ENCODE measurements at regions of chr13 and their contacts with region 1.

Region 1: GRCh38 chr13:87403748-87404432 is 267.3 kb upstream of the SLITRK5 start:
- DNase-seq: no peak
- ATAC-seq: no peak
- H3K4me3 ChIP-seq: no peak overlapping the region
- H3K27ac ChIP-seq: no peak overlapping the region
- H3K4me1 ChIP-seq: no peaks in the 10 kb centered on the region
- H3K27me3 ChIP-seq: no peaks in the 10 kb centered on the region
- CTCF ChIP-seq: no peak
- POLR2A ChIP-seq: no peak

Region 2: DNA sequence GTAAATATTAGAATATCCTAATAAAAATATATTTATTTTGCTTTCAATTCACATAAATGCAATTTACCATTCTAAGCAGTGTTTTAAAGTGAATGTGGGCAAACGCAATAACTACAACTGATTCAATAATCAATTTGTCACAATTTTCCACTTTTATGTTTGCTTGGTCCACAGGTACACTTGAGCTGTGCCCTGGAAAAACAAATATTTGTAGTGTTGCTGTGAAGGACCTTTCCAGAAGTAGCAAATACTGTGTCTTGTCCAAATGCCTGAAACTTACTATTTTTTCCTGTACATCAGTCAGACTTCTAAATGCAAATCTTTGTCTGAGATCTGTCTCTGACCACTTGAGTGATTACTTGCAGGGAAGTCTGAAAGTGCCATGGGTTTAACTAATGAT is 578.5 kb before region 1 on chr13:
- in situ Hi-C with region 1: no loop called
- intact Hi-C with region 1: no loop called
- DNase-seq: no peak
- ATAC-seq: no peak
- H3K4me3 ChIP-seq: no peak overlapping the region
- H3K27ac ChIP-seq: no peak overlapping the region
- H3K4me1 ChIP-seq: no peaks in the 10 kb centered on the region
- H3K27me3 ChIP-seq: no peaks in the 10 kb centered on the region
- CTCF ChIP-seq: no peak
- POLR2A ChIP-seq: no peak

Region 3: DNA sequence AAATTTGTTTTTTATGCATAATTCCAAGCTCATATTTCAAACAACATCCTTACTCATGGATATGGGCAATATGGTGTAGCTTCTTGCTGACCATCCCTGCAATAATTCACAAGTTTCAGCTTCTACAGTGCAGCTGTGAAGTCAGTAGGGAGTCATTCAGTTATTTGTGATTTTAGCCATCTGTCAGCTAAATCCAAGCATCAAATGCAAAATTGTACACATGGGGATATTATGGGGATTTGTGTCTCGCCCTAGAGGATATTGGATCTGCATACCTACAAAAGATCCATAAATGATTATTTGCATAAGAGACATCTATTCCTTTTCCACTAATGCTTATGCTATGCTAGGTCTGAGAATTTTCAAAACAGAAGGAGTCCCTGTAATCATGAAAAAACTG is 49.4 kb after region 1 on chr13:
- in situ Hi-C with region 1: no loop called
- intact Hi-C with region 1: loop called (anchors 2 kb)
- DNase-seq: no peak
- ATAC-seq: no peak
- H3K4me3 ChIP-seq: no peak overlapping the region
- H3K27ac ChIP-seq: no peak overlapping the region
- H3K4me1 ChIP-seq: no peaks in the 10 kb centered on the region
- H3K27me3 ChIP-seq: no peaks in the 10 kb centered on the region
- CTCF ChIP-seq: no peak
- POLR2A ChIP-seq: no peak